ENCODE measurements at regions of chr12 and their contacts with region 1.

Region 1: DNA sequence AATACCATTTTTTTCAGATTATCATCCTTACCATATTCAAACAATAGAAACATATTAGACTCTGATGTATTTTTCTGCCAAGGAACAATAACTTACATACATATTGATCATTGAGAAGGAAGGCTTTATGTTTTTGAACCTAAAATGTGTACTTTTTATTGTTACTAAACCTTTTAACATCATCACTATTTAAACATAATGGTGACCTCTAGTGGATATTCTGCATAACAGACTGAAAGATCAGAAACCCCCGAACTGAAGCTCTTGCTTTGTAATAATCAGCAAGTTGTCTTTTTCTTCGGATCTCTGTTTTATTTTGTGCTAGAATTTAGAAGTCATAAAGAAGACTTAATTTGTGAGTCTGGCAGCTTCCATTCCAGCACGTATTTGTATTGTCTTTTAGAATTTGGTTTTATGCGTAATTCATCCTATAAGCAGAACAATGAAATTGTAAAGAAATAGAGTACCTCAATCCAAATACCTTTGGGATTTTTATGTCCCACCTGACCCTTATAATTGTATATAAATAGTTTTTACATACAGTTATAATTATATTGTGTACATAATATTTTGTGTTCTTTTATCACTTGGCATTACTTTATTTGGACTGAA is 125.9 kb upstream of the ATF1 start:
- DNase-seq: peak; percentile 35 to 54
- ATAC-seq: 0 out of 6 replicates have a peak, but pooled peaks of 1 of the 2 experiments have one; percentile 43
- H3K4me3 ChIP-seq: no peak overlapping the region
- H3K27ac ChIP-seq: no peak overlapping the region; a peak in 1 of 6 replicates
- H3K4me1 ChIP-seq: peaks cover 35% of the 10 kb centered on the region
- CTCF ChIP-seq: peak; percentile 85
- EP300 ChIP-seq: no peak
- POLR2A ChIP-seq: no peak
- RAD21 ChIP-seq: peak; percentile 84 to 87

Region 2: DNA sequence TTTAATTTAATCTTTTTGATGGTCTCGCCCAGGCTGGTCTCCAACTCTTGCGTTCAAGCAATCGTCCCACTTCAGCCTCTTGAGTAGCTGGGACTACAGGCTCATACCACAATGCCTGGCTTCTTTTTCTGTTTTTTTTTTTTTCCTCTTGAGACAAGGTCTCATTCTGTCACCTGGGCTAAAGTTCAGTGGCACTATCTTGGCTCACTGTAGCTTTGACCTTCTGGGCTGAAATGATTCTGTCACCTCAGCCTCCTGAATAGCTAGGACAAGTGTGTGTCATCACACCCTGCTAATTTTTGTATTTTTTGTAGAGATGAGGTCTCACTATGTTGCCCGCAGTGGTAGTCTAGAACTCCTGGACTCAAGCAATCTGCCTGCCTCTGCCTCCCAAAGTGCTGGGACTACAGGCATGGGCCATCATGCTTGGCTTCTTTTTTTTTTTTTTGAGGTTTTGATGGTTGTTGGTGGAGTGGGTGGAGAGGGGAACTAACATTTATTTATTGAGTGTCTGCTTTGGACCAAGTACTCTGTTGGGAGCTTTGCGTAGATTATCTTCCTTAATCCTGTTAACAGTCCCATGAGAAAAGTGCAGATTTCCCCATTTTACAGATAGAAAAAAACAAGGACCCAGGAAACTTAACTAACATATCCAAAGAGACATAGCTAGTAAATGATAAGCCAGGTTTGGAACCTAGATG is 31.2 kb before region 1 on chr12:
- CTCF ChIA-PET with region 1: interaction called, 10 read pairs
- POLR2A ChIA-PET with region 1: no interaction called
- DNase-seq: no peak
- ATAC-seq: no peak
- H3K4me3 ChIP-seq: no peak overlapping the region
- H3K27ac ChIP-seq: no peak overlapping the region
- H3K4me1 ChIP-seq: no peaks in the 10 kb centered on the region
- CTCF ChIP-seq: no peak
- EP300 ChIP-seq: no peak
- POLR2A ChIP-seq: no peak
- RAD21 ChIP-seq: no peak

Region 3: DNA sequence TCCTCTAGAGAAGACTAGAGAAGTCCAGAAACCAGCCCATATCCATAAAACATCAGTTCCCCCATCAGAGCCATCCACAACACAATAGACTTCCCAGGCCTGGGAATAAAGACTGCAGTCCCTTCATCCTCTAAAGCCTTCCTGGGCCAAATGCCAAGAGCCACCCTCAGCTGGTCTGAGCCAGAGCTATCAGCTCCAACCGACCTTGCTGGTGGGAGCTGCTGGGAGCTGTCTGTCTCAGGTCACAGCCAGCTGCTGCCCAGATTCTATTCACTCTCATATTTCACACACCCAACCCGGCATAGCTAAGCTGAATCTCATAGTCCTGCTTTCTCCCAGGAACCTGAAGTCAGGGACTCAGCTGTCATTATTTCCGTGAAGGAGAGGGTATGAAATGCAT is 545.8 kb after region 1 on chr12:
- CTCF ChIA-PET with region 1: no interaction called
- POLR2A ChIA-PET with region 1: no interaction called
- DNase-seq: no peak
- ATAC-seq: peak; percentile 47 to 54; a peak in 3 of 6 replicates
- H3K4me3 ChIP-seq: no peak overlapping the region
- H3K27ac ChIP-seq: no peak overlapping the region
- H3K4me1 ChIP-seq: no peaks in the 10 kb centered on the region
- CTCF ChIP-seq: no peak
- EP300 ChIP-seq: no peak
- POLR2A ChIP-seq: no peak
- RAD21 ChIP-seq: no peak

Measured in A549 (cell line).